B cell (primary cell): ENCODE measurements at regions of chr14 and their contacts with region 1.

Region 1: DNA sequence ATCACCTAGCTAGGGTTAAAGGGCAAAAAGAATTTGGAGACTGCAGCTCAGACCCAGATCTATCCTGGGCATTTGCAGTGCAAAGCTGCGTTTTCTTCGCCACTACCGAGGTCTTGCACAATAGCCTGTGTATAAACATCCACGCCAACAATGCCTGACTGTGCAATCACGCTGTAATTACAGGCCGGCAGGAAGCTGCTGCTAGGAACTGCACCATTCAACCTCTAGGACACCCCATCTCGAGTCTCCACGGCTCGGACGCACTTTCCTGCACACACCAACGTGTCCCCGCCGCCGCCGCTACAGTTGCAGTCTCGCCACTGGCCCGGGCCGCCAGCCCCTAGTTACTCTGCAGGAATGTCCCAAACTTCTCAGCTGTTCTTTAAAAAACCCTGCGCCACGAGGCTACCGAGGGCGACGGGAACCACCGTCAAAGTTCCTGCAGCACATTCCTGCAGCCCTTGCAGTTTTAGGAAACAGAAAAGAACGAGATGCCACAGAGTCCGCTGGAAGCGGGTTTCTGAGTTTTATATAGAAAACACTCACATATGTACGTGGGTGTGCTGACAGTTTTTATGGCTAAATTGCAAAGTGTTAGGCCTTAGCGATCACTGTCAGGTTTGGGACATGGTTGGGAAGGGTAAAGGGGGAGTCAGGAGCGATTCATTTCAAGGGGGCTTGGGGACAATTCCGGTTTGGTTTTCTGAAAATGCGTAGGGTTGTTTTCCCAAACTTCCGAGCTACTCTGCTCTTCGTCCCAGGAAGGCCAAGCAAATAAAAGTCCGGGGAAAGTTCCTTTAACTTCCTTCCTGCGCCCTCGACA is 65.5 kb upstream of the PTGR2 start:
- DNase-seq: peak; percentile 70
- ATAC-seq: peak; percentile 53
- H3K4me3 ChIP-seq: peak overlapping the region; percentile 72 to 89 (median 80)
- H3K4me3 Mint-ChIP-seq: peak overlapping the region; percentile 92
- H3K27ac ChIP-seq: peak overlapping the region; percentile 37 to 90
- H3K27ac Mint-ChIP-seq: peak overlapping the region; percentile 93
- H3K4me1 ChIP-seq: peaks cover 43 to 49% of the 10 kb centered on the region in 2 donors
- H3K4me1 Mint-ChIP-seq: peaks cover 59% of the 10 kb centered on the region
- H3K27me3 ChIP-seq: no peaks in the 10 kb centered on the region
- H3K27me3 Mint-ChIP-seq: no peaks in the 10 kb centered on the region
- CTCF ChIP-seq: peak; percentile 9

Region 2: GRCh38 chr14:73458151-73458976 is 327.7 kb before region 1 on chr14 and contains the start of gene NUMB:
- CTCF ChIA-PET with region 1: no interaction called
- POLR2A ChIA-PET with region 1: interaction called, 12 read pairs
- intact Hi-C with region 1: no loop called
- DNase-seq: peak; percentile 99
- ATAC-seq: peak; percentile 97
- H3K4me3 ChIP-seq: peak within 1 kb of the TSS; percentile 74 to 97 (median 95)
- H3K4me3 Mint-ChIP-seq: peak within 1 kb of the TSS; percentile 96
- H3K27ac ChIP-seq: peak within 1 kb of the TSS; percentile 74 to 91
- H3K27ac Mint-ChIP-seq: peak within 1 kb of the TSS; percentile 95
- H3K4me1 ChIP-seq: peaks cover 23 to 34% of the 10 kb centered on the region in 2 donors
- H3K4me1 Mint-ChIP-seq: peaks cover 53% of the 10 kb centered on the region
- H3K27me3 ChIP-seq: no peaks in the 10 kb centered on the region
- H3K27me3 Mint-ChIP-seq: no peaks in the 10 kb centered on the region
- CTCF ChIP-seq: no peak
- total RNA-seq, gene NUMB: 102 and 108 TPM in 2 replicates

Region 3: DNA sequence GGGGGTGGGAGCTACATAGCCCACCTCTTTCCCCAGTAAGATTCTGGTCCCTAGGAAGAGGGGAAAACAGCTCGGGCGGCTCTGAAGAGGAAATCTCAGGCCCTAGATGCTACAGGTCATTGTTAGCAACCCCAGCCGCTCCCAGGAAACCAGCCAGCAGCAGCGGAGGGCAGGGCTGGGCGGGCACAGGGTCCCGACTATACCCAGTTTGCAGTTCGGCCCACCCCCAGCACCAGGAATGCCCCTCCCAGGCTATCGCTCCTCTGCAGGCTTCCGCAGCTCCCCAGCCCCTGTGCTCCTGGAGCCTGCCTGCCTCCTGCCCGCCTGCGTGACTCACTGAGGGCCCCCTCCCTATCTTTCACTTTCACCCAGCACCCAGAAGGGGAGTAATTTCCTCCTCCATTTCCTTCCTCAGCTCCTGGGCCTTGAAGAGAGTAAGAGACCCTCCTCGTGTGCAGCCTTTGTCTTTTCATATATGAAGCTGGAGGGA is 44.7 kb before region 1 on chr14:
- CTCF ChIA-PET with region 1: interaction called, 10 read pairs
- POLR2A ChIA-PET with region 1: interaction called, 3 read pairs
- intact Hi-C with region 1: no loop called
- DNase-seq: peak; percentile 73
- ATAC-seq: peak; percentile 77
- H3K4me3 ChIP-seq: peak overlapping the region; percentile 10 to 55 (median 43)
- H3K4me3 Mint-ChIP-seq: peak overlapping the region; percentile 94
- H3K27ac ChIP-seq: peak overlapping the region; percentile 61 to 81
- H3K27ac Mint-ChIP-seq: peak overlapping the region; percentile 99
- H3K4me1 ChIP-seq: peaks cover 63 to 71% of the 10 kb centered on the region in 2 donors
- H3K4me1 Mint-ChIP-seq: peaks cover 74% of the 10 kb centered on the region
- H3K27me3 ChIP-seq: no peaks in the 10 kb centered on the region
- H3K27me3 Mint-ChIP-seq: no peaks in the 10 kb centered on the region
- CTCF ChIP-seq: no peak

Region 4: GRCh38 chr14:73759714-73760597 is 26.1 kb before region 1 on chr14:
- CTCF ChIA-PET with region 1: interaction called, 113 read pairs
- POLR2A ChIA-PET with region 1: interaction called, 60 read pairs
- intact Hi-C with region 1: loop called (anchors 1 kb)
- DNase-seq: peak; percentile 98
- ATAC-seq: peak; percentile 67
- H3K4me3 ChIP-seq: peak overlapping the region; percentile 32 to 90 (median 87)
- H3K4me3 Mint-ChIP-seq: peak overlapping the region; percentile 92
- H3K27ac ChIP-seq: peak overlapping the region; percentile 98
- H3K27ac Mint-ChIP-seq: peak overlapping the region; percentile 97
- H3K4me1 ChIP-seq: peaks cover 79 to 85% of the 10 kb centered on the region in 2 donors
- H3K4me1 Mint-ChIP-seq: peaks cover 84% of the 10 kb centered on the region
- H3K27me3 ChIP-seq: no peaks in the 10 kb centered on the region
- H3K27me3 Mint-ChIP-seq: no peaks in the 10 kb centered on the region
- CTCF ChIP-seq: peak; percentile 21

Region 5: GRCh38 chr14:73825551-73826188 is 39.6 kb after region 1 on chr14:
- CTCF ChIA-PET with region 1: interaction called, 15 read pairs
- POLR2A ChIA-PET with region 1: no interaction called
- intact Hi-C with region 1: loop called (anchors 1 kb)
- DNase-seq: peak; percentile 81
- ATAC-seq: peak; percentile 99
- H3K4me3 ChIP-seq: no peak overlapping the region
- H3K4me3 Mint-ChIP-seq: no peak overlapping the region
- H3K27ac ChIP-seq: no peak overlapping the region
- H3K27ac Mint-ChIP-seq: no peak overlapping the region
- H3K4me1 ChIP-seq: no peaks in the 10 kb centered on the region
- H3K4me1 Mint-ChIP-seq: peaks cover 4% of the 10 kb centered on the region
- H3K27me3 ChIP-seq: no peaks in the 10 kb centered on the region
- H3K27me3 Mint-ChIP-seq: no peaks in the 10 kb centered on the region
- CTCF ChIP-seq: peak; percentile 93

Region 6: DNA sequence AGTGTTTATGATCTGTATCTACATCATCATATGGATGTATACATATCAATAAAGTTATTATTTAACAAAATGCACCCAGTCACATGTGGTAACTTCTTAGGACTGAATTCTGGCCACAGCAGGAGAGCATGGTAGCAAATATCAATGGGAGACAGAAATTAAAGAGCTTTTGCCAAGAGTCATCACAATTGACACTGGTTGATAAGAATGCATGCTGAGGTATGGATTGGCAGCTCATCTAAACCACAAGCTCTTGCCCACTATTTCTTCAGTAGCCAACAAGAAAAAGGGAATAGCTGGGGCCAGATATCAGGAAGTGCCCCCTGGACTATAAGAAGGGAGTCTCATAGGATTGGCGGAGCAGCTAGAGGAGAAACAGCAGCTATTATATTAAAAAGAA is 56.1 kb after region 1 on chr14:
- CTCF ChIA-PET with region 1: no interaction called
- POLR2A ChIA-PET with region 1: no interaction called
- intact Hi-C with region 1: no loop called
- DNase-seq: no peak
- ATAC-seq: no peak
- H3K4me3 ChIP-seq: no peak overlapping the region
- H3K4me3 Mint-ChIP-seq: no peak overlapping the region
- H3K27ac ChIP-seq: no peak overlapping the region
- H3K27ac Mint-ChIP-seq: no peak overlapping the region
- H3K4me1 ChIP-seq: no peaks in the 10 kb centered on the region
- H3K4me1 Mint-ChIP-seq: no peaks in the 10 kb centered on the region
- H3K27me3 ChIP-seq: no peaks in the 10 kb centered on the region
- H3K27me3 Mint-ChIP-seq: no peaks in the 10 kb centered on the region
- CTCF ChIP-seq: no peak